Vagina (tissue), 2 donors: ENCODE measurements at regions of chr2 and their contacts with region 1.

Region 1: GRCh38 chr2:202178342-202178958 is 59.9 kb downstream of the SUMO1 start:
- DNase-seq: no peak
- H3K4me3 ChIP-seq: no peak overlapping the region
- H3K27ac ChIP-seq: no peak overlapping the region
- H3K4me1 ChIP-seq: no peaks in the 10 kb centered on the region
- H3K27me3 ChIP-seq: no peaks in the 10 kb centered on the region
- CTCF ChIP-seq: peak; percentile 69 to 87 (median 70)
- POLR2A ChIP-seq: no peak

Region 2: DNA sequence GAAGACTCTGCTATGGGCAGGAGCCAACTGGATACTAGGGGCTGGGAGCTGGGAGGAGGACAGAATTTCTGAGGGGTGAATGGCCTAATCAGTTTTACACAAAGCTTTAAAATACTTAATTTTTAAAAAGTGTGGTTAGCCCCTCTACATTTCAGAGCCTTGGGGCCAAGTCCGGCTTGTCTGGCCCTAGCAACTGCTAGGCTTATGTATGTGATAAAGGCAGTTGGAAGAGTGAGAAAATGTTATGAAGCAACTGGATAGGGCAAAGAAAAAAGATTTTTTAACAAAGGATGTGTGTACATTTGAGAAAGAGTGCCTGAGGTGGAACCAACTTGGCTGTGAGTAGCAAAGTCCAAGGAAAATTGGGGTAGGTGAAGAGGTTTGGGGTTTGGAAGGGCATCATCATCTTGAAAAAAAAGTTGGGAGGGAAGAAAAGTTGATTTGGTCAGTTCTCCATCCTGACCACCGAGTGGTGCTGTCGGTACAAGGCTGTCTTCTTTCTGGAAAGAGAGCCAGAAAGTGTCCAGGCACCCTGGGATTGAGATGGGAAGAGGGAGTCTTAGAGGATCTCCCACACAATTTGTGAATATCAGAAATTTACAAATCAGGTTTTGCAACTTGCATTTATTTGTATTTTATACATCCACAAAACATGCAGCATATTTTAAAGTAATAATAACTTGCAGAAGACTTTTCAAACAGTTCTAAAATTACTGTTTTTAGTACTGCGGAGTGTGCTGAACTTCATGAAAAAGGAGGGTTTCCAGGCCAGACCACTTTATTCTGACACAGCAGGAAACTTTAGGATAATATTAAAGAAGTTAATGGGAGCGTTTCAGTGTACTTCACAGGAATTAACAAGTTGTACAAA is 382.6 kb before region 1 on chr2:
- intact Hi-C with region 1: loop called (anchors 10 kb)
- DNase-seq: no peak
- H3K4me3 ChIP-seq: no peak overlapping the region
- H3K27ac ChIP-seq: no peak overlapping the region
- H3K4me1 ChIP-seq: no peaks in the 10 kb centered on the region
- H3K27me3 ChIP-seq: no peaks in the 10 kb centered on the region
- CTCF ChIP-seq: peak in 2 of 3 experiments; percentile 35 to 43
- POLR2A ChIP-seq: no peak

Region 3: DNA sequence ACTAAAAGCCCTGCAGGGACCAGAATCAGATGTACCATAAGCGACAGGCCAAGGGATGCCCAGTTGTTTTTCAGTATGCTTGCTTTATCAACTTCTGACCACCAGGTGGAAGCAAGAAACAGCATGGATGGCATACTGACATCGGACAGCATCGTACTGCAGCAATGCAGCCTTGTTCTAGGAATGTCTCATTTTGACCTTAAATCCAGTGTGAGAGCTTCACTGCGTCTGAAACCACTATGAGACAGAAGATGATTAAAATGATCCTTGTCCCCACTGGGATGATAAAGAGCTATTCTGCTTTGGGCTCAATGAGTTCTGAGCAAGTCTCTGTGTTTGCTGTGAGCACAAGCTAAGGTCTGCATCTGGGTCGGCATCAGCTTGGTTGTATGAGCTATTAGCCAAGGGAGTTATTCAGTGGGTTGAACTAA is 317.8 kb before region 1 on chr2:
- intact Hi-C with region 1: loop called (anchors 5 kb)
- DNase-seq: no peak
- H3K4me3 ChIP-seq: no peak overlapping the region
- H3K27ac ChIP-seq: no peak overlapping the region
- H3K4me1 ChIP-seq: no peaks in the 10 kb centered on the region
- H3K27me3 ChIP-seq: no peaks in the 10 kb centered on the region
- CTCF ChIP-seq: peak; percentile 57 to 87 (median 68)
- POLR2A ChIP-seq: no peak